ENCODE measurements at regions of chr9 and their contacts with region 1.

Region 1: DNA sequence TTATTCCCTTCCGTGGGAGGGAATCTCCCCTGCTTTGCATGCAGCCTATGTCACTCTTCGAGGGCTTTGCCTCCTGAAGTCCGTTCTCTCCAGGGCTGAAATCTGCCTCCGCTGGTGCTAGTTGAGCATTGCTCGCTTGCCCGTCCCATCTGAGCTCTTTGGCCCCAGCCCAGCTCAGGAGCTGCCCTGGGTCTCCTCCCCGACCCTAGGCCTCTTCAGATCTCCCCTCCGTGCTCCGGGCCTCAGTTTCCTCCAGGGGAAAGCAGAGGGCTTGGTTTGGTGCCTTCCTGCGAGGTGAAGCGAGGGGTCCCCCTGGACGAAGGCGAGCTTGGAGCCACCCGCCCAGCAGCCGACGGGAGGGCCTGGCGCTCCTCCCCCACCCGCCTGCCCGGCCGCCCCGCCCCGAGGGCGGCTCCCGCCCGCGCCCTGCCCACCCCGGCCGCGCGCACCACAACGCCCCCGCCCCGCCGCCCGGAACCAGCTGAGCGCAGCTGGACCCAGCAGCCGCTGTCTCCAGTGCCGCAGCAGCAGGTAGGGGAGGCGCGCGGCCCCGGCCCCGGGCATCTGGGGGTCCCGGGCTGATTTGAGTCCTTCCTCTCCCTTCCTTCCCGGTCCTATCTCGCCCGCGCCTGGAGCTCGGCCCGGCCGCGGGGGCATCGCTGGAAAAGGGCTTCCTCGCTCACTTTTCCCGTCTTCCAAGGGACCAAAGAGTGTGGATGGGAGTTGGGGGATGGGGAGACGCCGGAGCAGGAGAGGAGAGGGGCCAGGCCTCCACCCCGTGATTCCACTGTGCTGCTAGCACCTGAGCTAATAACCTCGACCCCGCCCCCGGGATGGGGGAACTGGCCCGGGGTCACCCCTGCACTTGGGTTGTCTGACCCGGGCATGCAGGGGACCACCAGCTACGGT is at the start of gene GSN:
- DNase-seq: peak in 8 of 10 donors; percentile 77 to 90 (median 84)
- H3K4me3 ChIP-seq: peak within 1 kb of the TSS; percentile 59 to 97 (median 88)
- H3K27ac ChIP-seq: peak within 1 kb of the TSS; percentile 79 to 100 (median 97)
- H3K27me3 ChIP-seq: no peaks in the 10 kb centered on the region
- CTCF ChIP-seq: peak in 24 of 56 donors; percentile 7 to 42 (median 24)
- total RNA-seq, gene GSN: 88.2 to 740 (median 233) TPM

Region 2: GRCh38 chr9:121179930-121180681 is 87.8 kb before region 1 on chr9:
- intact Hi-C with region 1: no loop called
- DNase-seq: peak in 1 of 10 donors; percentile 40
- H3K4me3 ChIP-seq: no peak overlapping the region
- H3K27ac ChIP-seq: peak overlapping the region in 27 of 59 donors; percentile 7 to 53 (median 28)
- H3K27me3 ChIP-seq: no peaks in the 10 kb centered on the region
- CTCF ChIP-seq: no peak

Region 3: GRCh38 chr9:121201738-121202533 is 66.0 kb before region 1 on chr9 and contains the start of gene RAB14:
- intact Hi-C with region 1: loop called in 1 of 2 experiments (anchors 5 kb)
- DNase-seq: peak; percentile 98 to 99 (median 99)
- H3K4me3 ChIP-seq: peak within 1 kb of the TSS; percentile 68 to 98 (median 88)
- H3K27ac ChIP-seq: peak within 1 kb of the TSS; percentile 47 to 98 (median 92)
- H3K27me3 ChIP-seq: no peaks in the 10 kb centered on the region
- CTCF ChIP-seq: peak; percentile 29 to 86 (median 68)
- total RNA-seq, gene RAB14: 57.6 to 139 (median 99.3) TPM

Region 4: GRCh38 chr9:121222524-121223171 is 45.3 kb before region 1 on chr9:
- intact Hi-C with region 1: loop called (anchors 5 kb)
- DNase-seq: no peak
- H3K4me3 ChIP-seq: peak overlapping the region in 4 of 59 donors; percentile 10 to 28 (median 24)
- H3K27ac ChIP-seq: peak overlapping the region in 1 of 59 donors; percentile 18
- H3K27me3 ChIP-seq: no peaks in the 10 kb centered on the region
- CTCF ChIP-seq: peak; percentile 60 to 89 (median 78)

Region 5: DNA sequence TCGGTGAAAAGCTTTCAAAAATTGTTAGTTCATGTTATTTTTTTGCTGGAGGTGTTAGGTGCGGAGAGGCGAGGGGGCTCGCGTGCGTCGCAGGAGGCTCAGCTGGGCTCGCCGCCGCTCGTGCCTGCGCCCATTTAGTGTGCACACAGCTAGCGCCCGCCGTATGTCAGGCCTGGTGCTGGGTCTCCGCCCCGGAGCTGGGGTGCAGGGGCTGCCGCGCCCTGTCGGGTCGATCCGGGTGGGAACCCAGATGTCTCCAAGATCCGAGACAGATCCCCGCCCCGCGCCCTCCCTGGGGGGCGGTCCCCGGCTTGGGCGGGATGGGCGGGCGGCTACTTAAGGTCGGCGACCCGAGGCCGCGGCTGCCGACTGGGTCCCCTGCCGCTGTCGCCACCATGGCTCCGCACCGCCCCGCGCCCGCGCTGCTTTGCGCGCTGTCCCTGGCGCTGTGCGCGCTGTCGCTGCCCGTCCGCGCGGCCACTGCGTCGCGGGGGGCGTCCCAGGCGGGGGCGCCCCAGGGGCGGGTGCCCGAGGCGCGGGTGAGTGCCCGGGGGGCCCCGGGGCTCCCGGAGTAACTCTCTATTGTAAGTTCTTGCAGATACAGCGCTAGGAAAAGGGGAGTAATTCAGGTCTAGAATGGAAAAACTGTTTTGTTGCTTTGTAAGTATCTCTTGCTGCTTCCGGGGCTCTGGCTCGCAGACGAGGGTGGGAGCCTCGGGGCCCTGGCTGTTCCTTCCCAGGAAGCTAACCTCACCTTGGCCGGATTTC is 31.7 kb after region 1 on chr9:
- intact Hi-C with region 1: no loop called
- DNase-seq: peak in 3 of 10 donors; percentile 55 to 72 (median 60)
- H3K4me3 ChIP-seq: peak overlapping the region; percentile 48 to 80 (median 68)
- H3K27ac ChIP-seq: peak overlapping the region; percentile 77 to 100 (median 98)
- H3K27me3 ChIP-seq: no peaks in the 10 kb centered on the region
- CTCF ChIP-seq: peak in 16 of 56 donors; percentile 10 to 51 (median 21)

Region 6: GRCh38 chr9:121519046-121519445 is 251.1 kb after region 1 on chr9:
- intact Hi-C with region 1: no loop called
- DNase-seq: no peak
- H3K4me3 ChIP-seq: no peak overlapping the region
- H3K27ac ChIP-seq: no peak overlapping the region
- H3K27me3 ChIP-seq: no peaks in the 10 kb centered on the region
- CTCF ChIP-seq: no peak

Measured in dorsolateral prefrontal cortex (tissue), 120 donors.